K562 (cell line): ENCODE measurements at regions of chr22 and their contacts with region 1.

Region 1: GRCh38 chr22:20061481-20061861 is 18.6 kb upstream of the DGCR8 start:
- DNase-seq: no peak
- ATAC-seq: no peak
- H3K4me3 ChIP-seq: no peak overlapping the region
- H3K27ac ChIP-seq: no peak overlapping the region
- H3K4me1 ChIP-seq: peaks cover 28 to 85% of the 10 kb centered on the region in 2 experiments
- H3K27me3 ChIP-seq: no peaks in the 10 kb centered on the region
- CTCF ChIP-seq: no peak
- EP300 ChIP-seq: no peak
- POLR2A ChIP-seq: no peak
- RAD21 ChIP-seq: no peak

Region 2: GRCh38 chr22:20027966-20028854 is 33.3 kb before region 1 on chr22:
- CTCF ChIA-PET with region 1: interaction called, 3 read pairs
- POLR2A ChIA-PET with region 1: interaction called, 19 read pairs
- in situ Hi-C with region 1: no loop called
- intact Hi-C with region 1: no loop called
- DNase-seq: peak in 1 of 4 experiments; percentile 78
- ATAC-seq: peak; percentile 52
- H3K4me3 ChIP-seq: no peak overlapping the region
- H3K27ac ChIP-seq: no peak overlapping the region
- H3K4me1 ChIP-seq: peaks cover 36 to 75% of the 10 kb centered on the region in 2 experiments
- H3K27me3 ChIP-seq: no peaks in the 10 kb centered on the region
- CTCF ChIP-seq: peak; percentile 73 to 85 (median 81)
- EP300 ChIP-seq: 0 out of 2 replicates have a peak, but pooled peaks have one; percentile 14
- POLR2A ChIP-seq: no peak
- RAD21 ChIP-seq: peak in 1 of 2 experiments; percentile 73; a peak in 3 of 4 replicates

Region 3: GRCh38 chr22:20044495-20045151 is 16.8 kb before region 1 on chr22:
- CTCF ChIA-PET with region 1: no interaction called
- POLR2A ChIA-PET with region 1: interaction called, 26 read pairs
- in situ Hi-C with region 1: no loop called
- intact Hi-C with region 1: no loop called
- DNase-seq: no peak
- ATAC-seq: no peak
- H3K4me3 ChIP-seq: no peak overlapping the region
- H3K27ac ChIP-seq: no peak overlapping the region
- H3K4me1 ChIP-seq: peaks cover 0 to 7% of the 10 kb centered on the region in 2 experiments; a peak in 1 of 5 replicates
- H3K27me3 ChIP-seq: no peaks in the 10 kb centered on the region
- CTCF ChIP-seq: no peak
- EP300 ChIP-seq: no peak
- POLR2A ChIP-seq: no peak
- RAD21 ChIP-seq: no peak

Region 4: DNA sequence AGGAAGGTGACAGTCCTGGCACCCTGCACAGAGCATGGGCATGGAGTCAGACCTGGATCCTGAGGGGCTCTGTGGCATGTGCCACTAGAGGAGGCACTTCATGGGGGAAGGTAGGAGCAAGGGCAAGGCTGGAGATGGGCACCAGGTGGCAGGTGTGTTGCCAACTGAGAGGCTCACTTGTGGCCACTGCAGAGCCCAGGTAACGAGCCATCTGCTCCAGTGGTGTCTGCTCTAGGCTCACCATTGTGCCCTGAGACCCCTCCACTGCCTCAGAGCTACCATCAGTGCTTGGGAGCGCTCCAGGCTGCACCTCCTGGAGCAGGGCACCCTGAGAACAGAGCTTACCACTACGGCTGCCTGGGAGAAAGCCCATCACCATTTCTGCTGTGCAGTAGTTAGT is 68.8 kb after region 1 on chr22:
- CTCF ChIA-PET with region 1: no interaction called
- POLR2A ChIA-PET with region 1: no interaction called
- in situ Hi-C with region 1: no loop called
- intact Hi-C with region 1: no loop called
- DNase-seq: no peak
- ATAC-seq: no peak
- H3K4me3 ChIP-seq: no peak overlapping the region
- H3K27ac ChIP-seq: no peak overlapping the region
- H3K4me1 ChIP-seq: peaks cover 11 to 79% of the 10 kb centered on the region in 2 experiments
- H3K27me3 ChIP-seq: no peaks in the 10 kb centered on the region
- CTCF ChIP-seq: no peak
- EP300 ChIP-seq: no peak
- POLR2A ChIP-seq: no peak
- RAD21 ChIP-seq: no peak

Region 5: DNA sequence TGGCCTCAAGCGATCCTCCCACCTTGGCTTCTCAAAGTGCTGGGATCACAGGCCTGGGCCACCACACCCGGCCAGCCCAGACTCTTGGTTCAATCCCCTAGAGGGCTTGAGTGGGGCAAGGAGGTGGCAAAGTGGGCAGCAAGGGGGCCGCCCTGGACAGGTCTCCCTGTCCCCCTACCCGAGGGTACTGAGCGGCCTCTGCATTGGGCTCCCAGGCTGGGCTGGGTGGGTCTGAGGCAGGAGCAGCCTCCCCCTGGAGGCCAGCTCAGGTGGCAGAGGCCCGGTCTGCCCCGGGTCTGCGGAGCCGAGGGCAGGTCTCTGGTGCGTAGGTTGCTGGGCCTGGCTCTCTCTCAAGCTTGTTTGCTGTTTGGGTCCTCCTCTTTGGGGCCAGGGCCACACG is 111.8 kb after region 1 on chr22:
- CTCF ChIA-PET with region 1: no interaction called
- POLR2A ChIA-PET with region 1: no interaction called
- in situ Hi-C with region 1: no loop called
- intact Hi-C with region 1: no loop called
- DNase-seq: no peak
- ATAC-seq: no peak; the same call in 2 of the 3 replicates
- H3K4me3 ChIP-seq: no peak overlapping the region
- H3K27ac ChIP-seq: no peak overlapping the region
- H3K4me1 ChIP-seq: peaks cover 0 to 46% of the 10 kb centered on the region in 2 experiments; a peak in 1 of 5 replicates
- H3K27me3 ChIP-seq: peaks cover 84 to 97% of the 10 kb centered on the region in 2 experiments; a peak in 4 of 5 replicates
- CTCF ChIP-seq: no peak
- EP300 ChIP-seq: no peak
- POLR2A ChIP-seq: no peak
- RAD21 ChIP-seq: no peak